ENCODE measurements at regions of chr5 and their contacts with region 1.

Region 1: DNA sequence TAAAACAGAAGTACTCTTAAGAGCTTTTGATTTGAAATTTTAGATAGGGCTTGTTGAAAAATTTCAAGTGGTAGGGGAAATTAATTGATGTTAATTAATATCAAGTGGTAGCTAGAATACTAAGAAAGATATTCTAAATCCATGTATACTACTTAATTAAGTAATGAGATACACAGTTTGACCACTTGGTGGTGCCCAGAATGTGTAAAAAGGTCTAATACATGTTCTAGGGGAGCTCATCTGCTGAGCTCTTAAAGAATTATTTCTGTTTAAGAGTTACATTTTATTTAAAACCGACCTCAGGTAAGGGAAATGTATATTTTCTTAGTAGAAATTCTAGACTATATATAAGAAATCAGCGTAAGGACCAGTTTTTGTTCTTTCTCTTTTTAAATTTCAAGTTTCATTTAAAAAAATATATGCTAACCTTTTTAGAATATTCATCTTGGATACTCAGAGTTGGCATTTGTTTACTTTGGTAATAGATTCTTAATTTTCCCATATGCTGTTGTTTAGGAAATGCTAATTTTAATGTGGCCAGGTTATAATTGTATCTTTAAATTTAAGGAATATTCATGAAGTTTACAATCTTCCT is 61.5 kb downstream of the LNPEP start:
- DNase-seq: peak in 1 of 2 experiments; percentile 32
- H3K4me3 ChIP-seq: no peak overlapping the region
- H3K4me3 Mint-ChIP-seq: no peak overlapping the region
- H3K27ac Mint-ChIP-seq: no peak overlapping the region
- H3K4me1 ChIP-seq: peaks cover 4% of the 10 kb centered on the region
- H3K4me1 Mint-ChIP-seq: peaks cover 18% of the 10 kb centered on the region
- H3K27me3 ChIP-seq: no peaks in the 10 kb centered on the region
- H3K27me3 Mint-ChIP-seq: no peaks in the 10 kb centered on the region
- CTCF ChIP-seq: peak; percentile 47 to 49

Region 2: GRCh38 chr5:96868603-96869371 is 128.6 kb before region 1 on chr5:
- CTCF ChIA-PET with region 1: interaction called, 9 read pairs
- POLR2A ChIA-PET with region 1: no interaction called
- intact Hi-C with region 1: loop called (anchors 1 kb)
- DNase-seq: peak in 1 of 2 experiments; percentile 59
- H3K4me3 ChIP-seq: no peak overlapping the region
- H3K4me3 Mint-ChIP-seq: no peak overlapping the region
- H3K27ac Mint-ChIP-seq: no peak overlapping the region
- H3K4me1 ChIP-seq: peaks cover 4% of the 10 kb centered on the region; the same call in 1 of the 2 replicates
- H3K4me1 Mint-ChIP-seq: peaks cover 3% of the 10 kb centered on the region
- H3K27me3 ChIP-seq: no peaks in the 10 kb centered on the region
- H3K27me3 Mint-ChIP-seq: no peaks in the 10 kb centered on the region
- CTCF ChIP-seq: peak; percentile 91 to 96

Region 3: DNA sequence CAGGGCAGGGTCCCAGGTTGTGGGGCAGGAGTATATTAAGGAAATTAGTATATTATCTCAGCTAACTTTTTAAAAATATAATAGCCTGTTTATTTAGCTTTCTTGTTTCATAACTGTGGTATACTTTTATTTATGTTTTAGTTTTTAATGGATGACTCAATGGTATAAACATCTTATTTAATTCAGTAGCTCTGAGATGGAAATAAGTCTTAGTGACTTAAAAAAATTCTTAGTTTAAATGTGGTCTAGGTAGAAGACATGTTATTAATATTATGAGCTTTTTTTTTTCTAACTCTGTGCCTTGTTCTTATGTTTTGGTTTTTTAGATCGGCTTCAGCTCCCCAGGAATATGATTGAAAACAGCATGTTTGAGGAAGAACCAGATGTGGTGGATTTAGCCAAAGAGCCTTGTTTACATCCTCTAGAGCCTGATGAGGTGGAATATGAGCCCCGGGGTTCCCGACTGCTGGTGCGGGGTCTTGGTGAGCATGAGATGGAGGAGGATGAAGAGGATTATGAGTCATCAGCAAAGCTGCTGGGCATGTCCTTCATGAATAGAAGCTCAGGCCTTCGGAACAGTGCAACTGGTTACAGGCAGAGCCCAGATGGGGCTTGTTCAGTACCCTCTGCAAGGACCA is 18.4 kb before region 1 on chr5:
- CTCF ChIA-PET with region 1: no interaction called
- POLR2A ChIA-PET with region 1: no interaction called
- intact Hi-C with region 1: no loop called
- DNase-seq: no peak
- H3K4me3 ChIP-seq: no peak overlapping the region
- H3K4me3 Mint-ChIP-seq: no peak overlapping the region
- H3K27ac Mint-ChIP-seq: no peak overlapping the region
- H3K4me1 ChIP-seq: no peaks in the 10 kb centered on the region
- H3K4me1 Mint-ChIP-seq: no peaks in the 10 kb centered on the region
- H3K27me3 ChIP-seq: no peaks in the 10 kb centered on the region
- H3K27me3 Mint-ChIP-seq: no peaks in the 10 kb centered on the region
- CTCF ChIP-seq: no peak

Measured in Caco-2 (cell line).